GM10248 (cell line): ENCODE measurements at regions of chr19 and their contacts with region 1.

Region 1: DNA sequence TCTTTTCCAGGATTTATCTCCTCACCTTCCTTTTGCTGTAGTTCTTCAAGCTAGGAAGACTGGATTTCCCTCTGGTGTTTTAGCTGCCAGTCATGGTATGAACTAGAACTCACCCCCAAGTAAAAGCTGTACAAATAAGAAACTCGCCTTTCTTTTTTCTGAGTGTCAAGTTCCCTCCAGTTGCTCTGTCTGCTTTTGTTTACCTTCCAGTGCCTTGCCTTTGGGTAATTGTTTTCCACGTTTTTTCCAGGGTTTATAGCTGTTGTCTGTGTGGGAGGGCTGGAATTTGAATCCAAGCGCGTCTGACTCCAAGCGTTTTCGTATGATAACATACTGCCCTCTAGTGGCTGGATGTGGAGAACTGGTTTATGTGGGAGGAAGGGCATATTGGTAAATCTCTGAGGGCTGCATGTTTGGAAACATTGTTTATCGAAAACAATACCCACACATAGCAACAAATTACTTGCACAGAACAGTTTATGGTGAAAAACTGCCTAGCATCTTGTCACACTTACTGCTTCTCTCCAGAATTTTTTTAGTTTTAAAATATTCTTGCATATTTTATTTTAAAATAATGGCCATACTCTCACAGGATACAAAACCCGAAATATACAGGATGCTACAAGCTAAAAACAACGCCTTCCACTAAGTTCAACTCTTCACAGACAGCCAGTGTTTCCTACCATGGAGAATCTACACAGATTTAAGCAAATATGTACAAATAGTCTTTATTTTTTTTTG is 19.2 kb downstream of the RCN3 start:
- DNase-seq: peak; percentile 80
- CTCF ChIP-seq: peak; percentile 81

Region 2: DNA sequence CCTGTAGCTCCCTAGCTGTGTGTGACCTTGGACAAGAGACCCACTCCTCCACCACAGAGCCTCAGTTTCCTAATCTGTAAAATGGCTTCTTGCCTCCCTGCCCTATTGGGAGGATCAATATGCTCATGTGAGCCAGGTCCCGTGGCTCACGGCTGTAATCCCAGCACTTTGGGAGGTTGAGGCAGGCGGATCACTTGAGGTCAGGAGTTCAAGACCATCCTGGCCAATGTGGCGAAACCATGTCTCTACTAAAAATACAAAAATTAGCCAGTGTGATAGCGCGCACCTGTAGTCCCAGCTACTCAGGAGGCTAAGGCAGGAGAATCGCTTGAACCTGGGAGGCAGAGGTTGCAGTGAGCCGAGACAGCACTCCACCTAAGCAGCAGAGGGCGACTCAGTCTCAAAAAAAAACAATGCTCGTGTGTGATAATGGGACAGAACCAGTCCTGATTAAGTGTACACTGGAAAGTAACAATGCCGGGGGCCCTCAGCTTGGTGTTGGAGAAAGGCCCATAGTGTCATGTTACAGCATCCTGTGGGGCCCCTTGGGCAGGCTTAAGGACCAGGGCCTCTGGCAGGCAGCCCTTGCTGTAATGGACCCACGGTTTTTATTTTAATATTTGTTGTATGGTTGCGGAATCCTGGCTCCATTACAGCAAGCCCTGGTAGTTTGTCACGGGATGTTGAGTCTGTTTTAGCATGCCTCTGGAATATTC is 44.0 kb before region 1 on chr19:
- CTCF ChIA-PET with region 1: interaction called, 38 read pairs
- POLR2A ChIA-PET with region 1: no interaction called
- DNase-seq: no peak
- CTCF ChIP-seq: peak; percentile 59

Region 3: DNA sequence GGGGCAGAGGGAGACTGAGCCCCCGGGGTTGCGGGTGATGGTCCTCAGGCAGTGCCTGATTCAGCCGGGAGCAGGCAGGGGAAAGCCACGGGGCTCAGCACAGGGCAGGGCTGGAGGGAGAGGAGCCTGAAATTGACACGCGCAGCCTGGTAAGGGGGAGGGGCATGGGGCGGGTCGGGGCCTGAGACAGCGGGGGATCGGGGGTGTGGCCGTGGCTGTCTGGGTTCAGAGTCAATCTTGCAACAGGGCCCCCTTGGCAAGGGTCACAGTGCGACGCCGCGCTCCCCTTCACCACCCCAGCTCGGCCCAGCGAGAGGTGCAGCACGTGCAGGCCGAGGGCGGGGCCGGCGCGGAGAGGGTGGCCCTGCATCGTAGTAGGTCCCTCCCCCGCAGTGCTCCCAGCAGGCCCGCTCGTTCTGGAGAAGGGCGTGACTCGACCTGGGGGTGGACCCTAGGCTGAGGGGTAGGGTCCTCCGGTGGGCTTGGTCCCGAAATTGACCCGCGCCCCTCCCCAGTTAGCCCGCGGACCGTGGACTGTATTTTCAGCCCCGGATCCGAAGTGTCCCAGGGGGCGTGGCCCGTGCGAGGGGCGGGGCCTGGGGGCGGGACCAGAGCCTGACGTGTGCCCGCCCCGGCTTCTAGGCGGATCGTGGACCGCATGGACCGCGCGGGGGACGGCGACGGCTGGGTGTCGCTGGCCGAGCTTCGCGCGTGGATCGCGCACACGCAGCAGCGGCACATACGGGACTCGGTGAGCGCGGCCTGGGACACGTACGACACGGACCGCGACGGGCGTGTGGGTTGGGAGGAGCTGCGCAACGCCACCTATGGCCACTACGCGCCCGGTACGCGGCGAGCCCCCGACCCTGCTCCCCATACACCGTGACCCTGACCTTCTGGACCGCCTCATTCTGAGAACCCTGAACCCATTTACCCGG is 13.2 kb before region 1 on chr19:
- CTCF ChIA-PET with region 1: interaction called, 31 read pairs
- POLR2A ChIA-PET with region 1: interaction called, 3 read pairs
- DNase-seq: peak; percentile 84
- CTCF ChIP-seq: peak; percentile 13

Region 4: DNA sequence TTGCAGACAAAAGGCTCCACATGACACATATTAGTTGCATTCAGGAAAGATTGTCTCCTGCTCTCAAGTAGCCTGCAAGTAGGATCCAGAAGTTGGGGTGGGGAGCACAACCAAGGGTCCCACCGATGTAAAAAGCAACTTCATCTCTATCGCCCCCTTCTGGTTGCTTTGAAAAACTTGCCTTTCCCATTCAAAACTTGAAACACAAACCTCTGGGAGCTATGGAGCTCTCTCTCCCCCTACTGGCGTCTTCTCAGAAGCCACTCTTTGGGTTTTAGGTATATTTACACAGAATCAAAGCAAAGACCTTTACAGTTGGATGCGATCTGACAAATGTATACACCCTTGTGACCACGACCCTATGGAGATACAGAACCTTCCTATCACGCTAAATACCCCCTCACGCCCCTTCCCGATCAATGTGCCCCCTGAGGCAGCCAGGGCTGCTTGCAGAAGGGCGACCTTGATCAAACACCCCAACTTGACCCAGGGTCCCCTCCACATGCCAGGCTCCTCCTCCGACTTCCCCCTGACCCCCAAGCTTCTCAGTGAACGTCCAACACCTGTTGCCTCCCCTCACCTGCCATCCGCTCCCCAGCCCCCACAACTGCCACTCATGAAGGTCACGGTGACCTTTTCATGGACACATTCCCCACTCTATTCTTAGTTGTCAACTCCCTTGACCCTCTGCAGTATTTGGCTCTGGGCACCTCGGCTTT is 23.3 kb after region 1 on chr19:
- CTCF ChIA-PET with region 1: interaction called, 98 read pairs
- POLR2A ChIA-PET with region 1: no interaction called
- DNase-seq: peak; percentile 87
- CTCF ChIP-seq: peak; percentile 92